ENCODE measurements at regions of chr16 and their contacts with region 1.

Region 1: GRCh38 chr16:67150833-67151396 is at the start of gene B3GNT9:
- DNase-seq: peak; percentile 89 to 93
- ATAC-seq: peak; percentile 88
- H3K4me3 ChIP-seq: peak within 1 kb of the TSS; percentile 49 to 59
- H3K27ac ChIP-seq: peak within 1 kb of the TSS in 1 of 2 donors; percentile 41
- H3K4me1 ChIP-seq: no peaks in the 10 kb centered on the region
- H3K27me3 ChIP-seq: no peaks in the 10 kb centered on the region
- total RNA-seq, gene B3GNT9: 13.0 to 21.3 TPM

Region 2: DNA sequence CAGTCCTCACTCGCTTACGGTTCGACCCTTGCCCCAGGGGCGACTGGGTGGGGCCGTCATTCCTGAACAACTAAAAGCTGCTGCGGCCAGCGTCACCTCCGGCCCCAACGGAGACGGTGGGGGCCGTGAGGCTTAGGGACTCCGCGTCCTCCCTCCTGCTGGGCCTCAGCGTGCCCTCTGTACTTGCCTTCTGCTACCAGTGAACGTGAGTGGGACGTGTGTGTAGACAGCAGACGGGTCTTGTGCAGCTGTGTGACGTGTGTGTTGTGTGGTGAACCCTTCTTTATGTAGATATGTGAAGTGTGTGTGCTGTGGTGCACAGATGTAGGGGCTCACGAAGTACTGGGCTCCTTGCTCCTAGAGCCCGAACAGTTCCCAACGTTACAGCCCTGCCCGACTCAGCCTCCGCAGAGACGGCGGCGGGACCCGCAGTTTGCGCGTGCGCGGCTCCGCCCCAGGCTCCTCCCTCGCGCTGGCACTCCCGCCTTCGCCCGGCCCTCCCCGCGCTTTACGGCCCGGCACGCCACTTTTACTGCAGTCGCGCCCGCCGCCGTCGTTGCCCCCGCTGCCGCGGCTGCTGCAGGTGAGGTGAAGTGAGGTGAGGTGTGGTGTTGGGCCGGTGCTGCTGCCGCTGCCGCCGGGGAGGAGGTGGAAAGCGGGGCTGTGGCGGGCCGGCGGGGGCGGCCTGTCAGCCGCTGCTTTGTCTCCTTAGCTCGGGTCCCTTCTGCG is 41.3 kb before region 1 on chr16 and contains the start of gene PHAF1:
- intact Hi-C with region 1: loop called in 1 of 2 experiments (anchors 5 kb)
- DNase-seq: peak; percentile 95 to 98
- ATAC-seq: peak; percentile 98
- H3K4me3 ChIP-seq: peak within 1 kb of the TSS; percentile 50 to 71
- H3K27ac ChIP-seq: peak within 1 kb of the TSS in 1 of 2 donors; percentile 48
- H3K4me1 ChIP-seq: no peaks in the 10 kb centered on the region
- H3K27me3 ChIP-seq: no peaks in the 10 kb centered on the region
- total RNA-seq, gene PHAF1: 13.7 to 20.7 TPM

Measured in aorta (tissue), 5 donors.